H1 (cell line): ENCODE measurements at regions of chr1 and their contacts with region 1.

Region 1: DNA sequence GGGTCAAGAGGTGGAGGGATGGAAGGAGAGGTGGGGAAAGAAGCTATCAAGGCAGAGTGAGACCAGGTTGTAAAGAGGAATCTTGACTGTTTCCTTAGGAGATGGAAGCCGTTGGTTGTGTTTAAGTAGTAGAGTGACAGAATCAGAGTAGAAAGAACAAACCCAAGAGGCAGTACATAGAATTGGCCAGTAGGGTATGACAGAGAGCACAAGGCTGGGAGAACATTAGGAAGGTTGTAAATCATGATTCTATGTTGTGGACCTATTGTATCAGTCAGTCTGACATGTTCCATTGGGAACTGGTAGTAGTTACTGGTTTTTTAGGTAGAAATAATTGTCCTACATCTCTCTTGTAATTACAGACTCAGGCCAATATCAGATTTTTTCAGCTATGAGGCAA is 486.9 kb upstream of the USP24 start:
- DNase-seq: no peak
- H3K4me3 ChIP-seq: no peak overlapping the region
- H3K27ac ChIP-seq: no peak overlapping the region
- H3K4me1 ChIP-seq: no peaks in the 10 kb centered on the region
- H3K27me3 ChIP-seq: no peaks in the 10 kb centered on the region
- CTCF ChIP-seq: peak in 2 of 3 experiments; percentile 53 to 92; a peak in 2 of 4 replicates
- EP300 ChIP-seq: no peak
- POLR2A ChIP-seq: no peak
- RAD21 ChIP-seq: peak; percentile 54 to 67

Region 2: GRCh38 chr1:55690366-55690765 is 11.7 kb before region 1 on chr1:
- CTCF ChIA-PET with region 1: interaction called, 36 read pairs
- POLR2A ChIA-PET with region 1: no interaction called
- DNase-seq: no peak
- H3K4me3 ChIP-seq: no peak overlapping the region
- H3K27ac ChIP-seq: no peak overlapping the region
- H3K4me1 ChIP-seq: no peaks in the 10 kb centered on the region
- H3K27me3 ChIP-seq: no peaks in the 10 kb centered on the region; a peak in 1 of 7 replicates
- CTCF ChIP-seq: no peak
- EP300 ChIP-seq: no peak
- POLR2A ChIP-seq: no peak
- RAD21 ChIP-seq: no peak

Region 3: DNA sequence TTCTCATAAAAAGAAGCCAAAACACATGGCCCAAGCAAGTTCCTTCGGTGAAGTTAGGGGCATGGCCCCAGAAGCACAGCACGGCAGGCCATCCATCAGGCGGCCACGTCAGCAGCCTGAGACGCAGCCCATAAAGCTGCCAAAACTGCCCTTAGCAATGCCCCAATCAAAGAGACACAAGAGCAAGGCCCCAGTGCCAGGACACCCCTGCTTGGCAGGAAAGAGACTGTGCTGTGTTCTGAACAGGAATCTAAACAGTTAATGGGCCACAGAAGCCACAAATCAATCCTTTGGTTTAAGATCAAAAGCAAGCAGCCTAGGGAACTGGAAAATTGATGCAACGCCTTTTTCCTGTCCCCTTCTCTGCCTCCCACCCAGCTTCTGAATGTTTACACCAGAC is 10.1 kb after region 1 on chr1:
- CTCF ChIA-PET with region 1: interaction called, 23 read pairs
- POLR2A ChIA-PET with region 1: no interaction called
- DNase-seq: no peak
- H3K4me3 ChIP-seq: no peak overlapping the region
- H3K27ac ChIP-seq: no peak overlapping the region
- H3K4me1 ChIP-seq: peaks cover 0 to 4% (median 0%) of the 10 kb centered on the region in 4 experiments; a peak in 1 of 7 replicates
- H3K27me3 ChIP-seq: no peaks in the 10 kb centered on the region
- CTCF ChIP-seq: no peak
- EP300 ChIP-seq: no peak
- POLR2A ChIP-seq: no peak
- RAD21 ChIP-seq: no peak

Region 4: DNA sequence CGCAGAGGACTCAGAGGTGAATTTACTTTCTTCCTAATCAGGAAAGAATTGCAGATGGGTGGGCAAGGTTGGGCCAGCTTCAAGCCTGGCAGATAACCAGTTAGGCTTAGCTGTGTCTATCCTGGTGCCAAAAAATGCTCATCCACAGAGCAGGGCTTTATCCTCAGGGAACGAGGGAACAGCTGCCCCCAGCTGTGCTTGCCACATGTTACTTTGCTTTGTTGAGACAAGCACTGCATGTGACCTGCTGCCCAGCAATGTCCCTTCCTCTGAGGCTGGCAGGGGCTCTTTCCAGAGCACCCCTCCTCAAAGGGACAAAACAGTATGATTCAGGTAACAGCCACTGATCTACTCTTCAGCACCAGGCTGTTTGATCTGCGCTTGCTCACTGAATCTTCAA is 18.2 kb after region 1 on chr1:
- CTCF ChIA-PET with region 1: interaction called, 10 read pairs
- POLR2A ChIA-PET with region 1: no interaction called
- DNase-seq: no peak
- H3K4me3 ChIP-seq: no peak overlapping the region
- H3K27ac ChIP-seq: no peak overlapping the region
- H3K4me1 ChIP-seq: peaks cover 0 to 16% (median 13%) of the 10 kb centered on the region in 4 experiments; a peak in 4 of 7 replicates
- H3K27me3 ChIP-seq: no peaks in the 10 kb centered on the region
- CTCF ChIP-seq: no peak
- EP300 ChIP-seq: no peak
- POLR2A ChIP-seq: no peak
- RAD21 ChIP-seq: no peak